Activated naive CD4-positive, alpha-beta T cell treated with anti-CD3 and anti-CD28 coated beads for 36 hours (primary cell): ENCODE measurements at regions of chr7 and their contacts with region 1.

Region 1: DNA sequence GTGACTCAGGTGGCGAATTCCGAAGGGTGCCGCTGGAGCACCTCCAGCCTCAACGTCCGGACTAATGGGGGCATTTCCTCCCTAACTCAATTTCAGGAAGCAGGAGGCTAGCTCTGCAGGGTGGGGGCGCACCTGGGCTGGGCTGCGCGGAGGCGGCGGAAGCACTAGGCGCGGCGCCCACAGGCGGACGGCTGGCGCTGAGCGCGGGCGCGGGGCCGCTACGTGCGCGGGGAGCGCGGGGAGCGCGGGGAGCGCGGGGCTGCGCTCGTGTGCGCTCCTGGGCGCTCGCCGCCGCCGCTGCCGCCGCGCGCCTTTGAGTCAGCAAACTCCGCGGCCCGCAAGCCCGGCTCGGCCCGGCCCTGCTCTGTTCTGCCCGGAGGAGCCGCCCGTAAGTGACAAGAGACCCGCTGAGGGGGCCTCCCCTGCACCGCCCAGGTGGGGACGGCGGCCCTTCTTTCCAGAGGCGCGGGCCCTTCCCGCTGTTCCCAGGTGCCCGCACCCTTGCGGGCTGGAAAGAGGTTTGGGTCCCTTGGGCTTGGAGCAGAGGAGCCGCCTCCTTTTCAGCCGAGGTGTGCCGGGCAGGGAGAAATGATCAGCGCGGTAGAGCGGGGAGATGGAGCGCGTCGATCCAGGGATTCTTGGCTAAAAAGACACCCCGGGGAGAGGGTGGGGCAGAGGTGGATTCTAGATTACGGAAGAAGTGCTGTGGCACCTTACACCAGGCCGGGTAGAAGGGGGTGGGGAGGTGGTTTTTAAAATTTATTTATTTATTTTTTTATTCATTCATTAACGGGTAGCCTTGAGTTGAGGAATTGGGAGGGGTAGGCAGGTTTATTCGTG is at the start of gene SNX10:
- DNase-seq: peak; percentile 78
- H3K4me3 Mint-ChIP-seq: peak within 1 kb of the TSS; percentile 88
- H3K27ac Mint-ChIP-seq: peak within 1 kb of the TSS; percentile 59
- H3K4me1 Mint-ChIP-seq: peaks cover 26% of the 10 kb centered on the region
- H3K27me3 Mint-ChIP-seq: no peaks in the 10 kb centered on the region
- total RNA-seq, gene SNX10: 17.0 to 17.5 TPM

Region 2: GRCh38 chr7:25804154-25804553 is 487.8 kb before region 1 on chr7:
- CTCF ChIA-PET with region 1: no interaction called
- intact Hi-C with region 1: loop called (anchors 5 kb)
- DNase-seq: no peak
- H3K4me3 Mint-ChIP-seq: no peak overlapping the region
- H3K27ac Mint-ChIP-seq: no peak overlapping the region
- H3K4me1 Mint-ChIP-seq: peaks cover 19% of the 10 kb centered on the region
- H3K27me3 Mint-ChIP-seq: peaks cover 3% of the 10 kb centered on the region

Region 3: GRCh38 chr7:26090927-26091519 is 200.9 kb before region 1 on chr7:
- CTCF ChIA-PET with region 1: interaction called, 8 read pairs
- intact Hi-C with region 1: loop called (anchors 2 kb)
- DNase-seq: peak; percentile 15
- H3K4me3 Mint-ChIP-seq: no peak overlapping the region
- H3K27ac Mint-ChIP-seq: no peak overlapping the region
- H3K4me1 Mint-ChIP-seq: peaks cover 19% of the 10 kb centered on the region
- H3K27me3 Mint-ChIP-seq: no peaks in the 10 kb centered on the region

Region 4: GRCh38 chr7:26265065-26265464 is 26.9 kb before region 1 on chr7:
- CTCF ChIA-PET with region 1: no interaction called
- intact Hi-C with region 1: no loop called
- DNase-seq: peak; percentile 12
- H3K4me3 Mint-ChIP-seq: no peak overlapping the region
- H3K27ac Mint-ChIP-seq: no peak overlapping the region
- H3K4me1 Mint-ChIP-seq: no peaks in the 10 kb centered on the region
- H3K27me3 Mint-ChIP-seq: peaks cover 4% of the 10 kb centered on the region

Region 5: GRCh38 chr7:26278770-26279169 is 13.1 kb before region 1 on chr7:
- CTCF ChIA-PET with region 1: interaction called, 9 read pairs
- intact Hi-C with region 1: loop called (anchors 1 kb)
- DNase-seq: no peak
- H3K4me3 Mint-ChIP-seq: no peak overlapping the region
- H3K27ac Mint-ChIP-seq: no peak overlapping the region
- H3K4me1 Mint-ChIP-seq: peaks cover 9% of the 10 kb centered on the region
- H3K27me3 Mint-ChIP-seq: no peaks in the 10 kb centered on the region

Region 6: DNA sequence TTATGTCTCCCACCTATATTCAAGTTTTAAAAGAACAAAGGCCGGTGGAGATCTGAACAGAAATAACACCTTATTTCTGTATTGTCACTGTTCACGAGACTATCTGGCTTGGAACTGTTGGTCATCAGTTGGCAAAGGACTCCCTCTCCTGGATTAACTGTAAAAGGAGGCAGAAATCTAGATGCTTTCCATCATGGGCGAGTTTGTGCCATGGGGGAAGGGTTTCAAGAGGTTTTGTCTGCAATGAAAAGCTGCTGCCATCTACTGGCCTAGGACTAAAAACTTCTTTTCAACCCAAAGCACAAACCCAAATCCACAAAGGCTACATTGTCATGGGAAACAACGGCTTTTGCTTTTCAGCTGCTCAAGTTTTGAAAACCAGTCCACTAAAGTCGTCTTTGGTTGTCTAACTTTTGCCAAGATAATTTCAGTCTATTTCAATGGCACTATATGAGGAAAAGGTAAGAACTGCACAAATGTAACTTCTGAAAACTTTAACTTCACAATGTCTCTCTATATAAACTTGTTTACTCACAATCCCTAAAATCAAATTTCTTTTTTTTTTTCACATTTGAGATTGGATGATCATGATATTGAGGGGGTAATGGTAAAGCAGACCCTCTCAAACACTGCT is 375.7 kb after region 1 on chr7:
- CTCF ChIA-PET with region 1: no interaction called
- intact Hi-C with region 1: loop called (anchors 1 kb)
- DNase-seq: peak; percentile 78
- H3K4me3 Mint-ChIP-seq: no peak overlapping the region
- H3K27ac Mint-ChIP-seq: no peak overlapping the region
- H3K4me1 Mint-ChIP-seq: peaks cover 19% of the 10 kb centered on the region
- H3K27me3 Mint-ChIP-seq: peaks cover 4% of the 10 kb centered on the region

Region 7: DNA sequence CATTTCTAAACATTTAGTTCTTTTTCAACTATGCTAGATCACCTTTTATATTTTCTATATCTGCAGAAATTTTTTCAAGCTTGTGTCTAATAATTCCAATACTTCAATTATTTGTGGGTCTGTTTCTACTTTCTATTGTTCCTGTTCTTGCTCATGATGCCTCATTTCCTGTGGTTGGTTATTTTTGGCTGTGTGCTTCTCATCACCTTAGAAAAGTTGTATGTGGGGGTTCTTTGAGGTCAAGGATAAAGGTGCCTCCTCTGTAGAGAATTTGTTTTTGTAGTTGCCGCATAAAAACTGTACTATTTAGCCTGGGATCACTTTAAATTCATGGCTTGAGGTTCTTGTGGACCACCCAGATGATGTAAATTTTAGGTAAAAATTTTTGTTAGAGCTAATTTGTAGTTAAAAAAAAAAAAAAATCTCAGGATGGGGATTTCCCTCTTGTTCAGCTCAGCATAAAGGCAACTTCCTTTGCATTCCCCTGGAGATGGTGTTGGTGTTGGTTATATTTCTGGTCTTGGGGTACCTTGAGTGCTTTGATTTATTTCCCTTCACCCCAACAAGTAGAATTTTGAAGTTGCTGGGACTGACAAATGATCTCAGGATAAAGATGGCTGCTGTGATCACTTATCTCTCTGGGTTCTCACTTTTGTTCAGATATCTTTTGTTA is 1915.7 kb after region 1 on chr7:
- CTCF ChIA-PET with region 1: no interaction called
- intact Hi-C with region 1: loop called (anchors 10 kb)
- DNase-seq: peak; percentile 30
- H3K4me3 Mint-ChIP-seq: no peak overlapping the region
- H3K27ac Mint-ChIP-seq: peak overlapping the region; percentile 43
- H3K4me1 Mint-ChIP-seq: peaks cover 39% of the 10 kb centered on the region
- H3K27me3 Mint-ChIP-seq: peaks cover 7% of the 10 kb centered on the region